ENCODE measurements at regions of chr14 and their contacts with region 1.

Region 1: DNA sequence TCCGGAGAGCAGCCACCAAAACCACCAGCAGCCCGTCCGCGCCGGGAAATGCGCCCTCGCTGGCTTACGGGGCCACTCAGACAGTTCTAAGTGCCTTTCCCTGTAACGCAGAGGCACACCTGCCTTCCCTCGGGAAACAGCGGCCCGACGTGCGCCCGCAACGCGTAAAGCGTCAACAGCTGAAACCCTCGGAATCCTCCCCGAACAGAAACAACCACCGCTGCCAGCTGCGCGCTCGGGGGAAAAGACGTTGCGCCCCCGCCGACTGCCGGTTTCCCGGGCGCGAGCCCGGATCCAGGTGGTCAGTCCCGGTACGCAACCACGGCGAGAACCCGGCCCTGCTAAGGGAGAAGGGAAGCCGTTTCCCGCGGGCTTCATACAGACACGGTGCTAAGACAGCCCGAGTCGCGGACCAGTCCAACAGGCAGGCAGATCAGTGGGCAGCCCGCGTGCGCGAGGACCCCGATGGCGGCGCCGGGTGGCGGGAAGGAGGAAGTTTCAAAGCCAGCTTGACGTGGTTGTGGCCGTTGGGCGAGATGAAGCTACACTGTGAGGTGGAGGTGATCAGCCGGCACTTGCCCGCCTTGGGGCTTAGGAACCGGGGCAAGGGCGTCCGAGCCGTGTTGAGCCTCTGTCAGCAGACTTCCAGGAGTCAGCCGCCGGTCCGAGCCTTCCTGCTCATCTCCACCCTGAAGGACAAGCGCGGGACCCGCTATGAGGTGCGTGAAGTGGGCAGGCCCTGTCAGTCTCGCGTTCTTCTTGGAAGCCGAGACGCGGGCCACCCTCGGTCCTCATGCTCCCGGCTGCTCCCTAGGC is at the start of gene LRR1:
- DNase-seq: peak; percentile 88
- H3K4me3 Mint-ChIP-seq: peak within 1 kb of the TSS; percentile 95
- H3K27ac Mint-ChIP-seq: peak within 1 kb of the TSS; percentile 95
- H3K4me1 Mint-ChIP-seq: peaks cover 47% of the 10 kb centered on the region
- H3K27me3 Mint-ChIP-seq: no peaks in the 10 kb centered on the region
- total RNA-seq, gene LRR1: 48.7 to 53.2 TPM

Region 2: GRCh38 chr14:49612671-49613070 is 14.0 kb after region 1 on chr14:
- CTCF ChIA-PET with region 1: no interaction called
- POLR2A ChIA-PET with region 1: interaction called, 21 read pairs
- DNase-seq: no peak
- H3K4me3 Mint-ChIP-seq: no peak overlapping the region
- H3K27ac Mint-ChIP-seq: no peak overlapping the region
- H3K4me1 Mint-ChIP-seq: peaks cover 38% of the 10 kb centered on the region
- H3K27me3 Mint-ChIP-seq: no peaks in the 10 kb centered on the region

Measured in activated CD4-positive, alpha-beta memory T cell treated with anti-CD3 and anti-CD28 coated beads, Interleukin-2, amount 10 ng/mL, durations not matched to agents 7 days and 5 days (primary cell).